ENCODE measurements at regions of chr5 and their contacts with region 1.

Region 1: GRCh38 chr5:97534166-97534565 is 351.1 kb upstream of the RIOK2 start:
- DNase-seq: no peak
- H3K4me3 ChIP-seq: no peak overlapping the region
- H3K27ac ChIP-seq: no peak overlapping the region
- H3K27me3 ChIP-seq: no peaks in the 10 kb centered on the region
- CTCF ChIP-seq: peak in 55 of 56 donors; percentile 26 to 79 (median 62)

Region 2: GRCh38 chr5:97231025-97231636 is 303.0 kb before region 1 on chr5:
- intact Hi-C with region 1: loop called in 1 of 2 experiments (anchors 5 kb)
- DNase-seq: peak in 4 of 10 donors; percentile 6 to 45 (median 24)
- H3K4me3 ChIP-seq: peak overlapping the region in 10 of 59 donors; percentile 0 to 33 (median 18)
- H3K27ac ChIP-seq: no peak overlapping the region
- H3K27me3 ChIP-seq: no peaks in the 10 kb centered on the region
- CTCF ChIP-seq: peak; percentile 68 to 95 (median 82)

Region 3: GRCh38 chr5:97297063-97297703 is 237.0 kb before region 1 on chr5:
- intact Hi-C with region 1: loop called in 1 of 2 experiments (anchors 5 kb)
- DNase-seq: peak in 3 of 10 donors; percentile 6 to 51 (median 42)
- H3K4me3 ChIP-seq: no peak overlapping the region
- H3K27ac ChIP-seq: no peak overlapping the region
- H3K27me3 ChIP-seq: no peaks in the 10 kb centered on the region
- CTCF ChIP-seq: peak in 51 of 56 donors; percentile 27 to 68 (median 50)

Region 4: DNA sequence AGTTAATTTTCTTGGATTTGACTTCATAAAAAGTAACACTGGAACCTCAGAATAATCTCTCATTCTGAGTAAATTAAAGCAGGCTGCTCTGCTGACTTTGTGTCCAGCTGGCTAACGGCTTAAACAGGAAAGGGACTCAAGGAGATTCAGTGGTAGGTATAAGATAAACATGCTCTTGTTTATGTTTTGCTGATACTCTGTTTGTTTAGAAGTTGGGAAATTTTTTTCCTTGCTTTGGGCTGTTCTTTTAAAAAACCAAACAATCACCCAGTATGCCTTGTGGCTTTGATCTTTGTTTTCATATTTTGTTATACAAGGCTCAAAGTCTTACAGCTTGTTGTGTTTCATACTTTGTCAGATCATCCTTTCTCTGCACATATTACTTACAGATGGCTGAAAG is 113.5 kb before region 1 on chr5:
- intact Hi-C with region 1: loop called in 1 of 2 experiments (anchors 5 kb)
- DNase-seq: no peak
- H3K4me3 ChIP-seq: no peak overlapping the region
- H3K27ac ChIP-seq: no peak overlapping the region
- H3K27me3 ChIP-seq: no peaks in the 10 kb centered on the region
- CTCF ChIP-seq: no peak

Measured in dorsolateral prefrontal cortex (tissue), 120 donors.